Naive thymus-derived CD4-positive, alpha-beta T cell (primary cell): ENCODE measurements at regions of chr14 and their contacts with region 1.

Region 1: GRCh38 chr14:55354500-55354899 is 57.1 kb downstream of the ATG14 start:
- DNase-seq: peak; percentile 25 to 79 (median 73)
- ATAC-seq: peak; percentile 95
- H3K4me3 ChIP-seq: peak overlapping the region; percentile 12
- H3K4me3 Mint-ChIP-seq: peak overlapping the region in 9 of 10 donors; percentile 48 to 85 (median 72)
- H3K27ac ChIP-seq: peak overlapping the region; percentile 66
- H3K27ac Mint-ChIP-seq: peak overlapping the region; percentile 72 to 96 (median 95)
- H3K4me1 ChIP-seq: peaks cover 0 to 9% of the 10 kb centered on the region in 2 donors
- H3K4me1 Mint-ChIP-seq: peaks cover 6 to 29% (median 21%) of the 10 kb centered on the region in 7 donors
- H3K27me3 ChIP-seq: no peaks in the 10 kb centered on the region
- H3K27me3 Mint-ChIP-seq: no peaks in the 10 kb centered on the region

Region 2: DNA sequence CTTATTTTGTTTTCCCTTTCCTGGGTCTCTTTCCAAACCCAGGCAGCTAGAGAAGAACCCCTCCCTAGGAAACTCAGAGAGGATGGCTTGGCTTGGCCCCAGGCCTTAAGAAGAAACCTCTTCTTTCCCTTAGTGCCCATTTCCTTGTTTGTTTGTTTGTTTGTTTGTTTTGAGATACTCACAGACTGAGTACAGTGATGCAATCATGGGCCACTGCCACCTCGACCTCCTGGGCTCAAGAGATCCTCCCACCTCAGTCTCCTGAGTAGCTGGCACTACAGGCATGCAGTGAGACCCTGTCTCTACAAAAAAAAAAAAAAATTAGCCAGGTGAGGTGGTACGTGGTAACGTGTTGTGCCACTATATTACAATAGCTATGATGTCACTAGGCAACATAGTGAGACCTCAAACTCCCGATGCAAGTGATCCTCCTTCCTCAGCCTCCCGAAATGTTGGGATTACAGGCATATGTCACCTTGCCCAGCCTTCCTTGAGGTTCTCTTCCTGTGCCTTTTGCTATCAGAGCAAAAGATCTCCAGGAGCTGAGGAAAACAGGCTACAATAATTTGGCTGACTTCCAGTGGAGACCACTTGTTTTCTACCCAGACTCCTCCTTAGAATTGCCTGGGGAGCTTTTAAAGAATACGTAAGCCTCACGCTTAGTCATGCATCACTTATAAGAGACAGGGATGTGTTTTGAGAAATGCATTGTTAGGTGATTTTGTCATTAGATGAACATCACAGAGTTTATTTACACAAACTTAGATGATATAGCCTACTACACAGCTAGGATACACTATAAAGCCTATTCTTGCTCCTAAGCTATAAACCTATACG is 260.0 kb before region 1 on chr14:
- CTCF ChIA-PET with region 1: interaction called, 4 read pairs
- POLR2A ChIA-PET with region 1: no interaction called
- intact Hi-C with region 1: loop called in 1 of 2 experiments (anchors 1 kb)
- DNase-seq: no peak
- ATAC-seq: no peak
- H3K4me3 ChIP-seq: no peak overlapping the region
- H3K4me3 Mint-ChIP-seq: no peak overlapping the region
- H3K27ac ChIP-seq: no peak overlapping the region
- H3K27ac Mint-ChIP-seq: no peak overlapping the region
- H3K4me1 ChIP-seq: peaks cover 0 to 14% of the 10 kb centered on the region in 2 donors
- H3K4me1 Mint-ChIP-seq: peaks cover 12 to 43% (median 16%) of the 10 kb centered on the region in 7 donors
- H3K27me3 ChIP-seq: no peaks in the 10 kb centered on the region
- H3K27me3 Mint-ChIP-seq: peaks cover 0 to 4% (median 0%) of the 10 kb centered on the region in 5 donors

Region 3: GRCh38 chr14:55212634-55213033 is 141.9 kb before region 1 on chr14:
- CTCF ChIA-PET with region 1: interaction called, 19 read pairs
- POLR2A ChIA-PET with region 1: interaction called, 4 read pairs
- intact Hi-C with region 1: loop called (anchors 1 kb)
- DNase-seq: no peak
- ATAC-seq: no peak
- H3K4me3 ChIP-seq: no peak overlapping the region
- H3K4me3 Mint-ChIP-seq: no peak overlapping the region
- H3K27ac ChIP-seq: no peak overlapping the region
- H3K27ac Mint-ChIP-seq: no peak overlapping the region
- H3K4me1 ChIP-seq: no peaks in the 10 kb centered on the region
- H3K4me1 Mint-ChIP-seq: peaks cover 0 to 5% (median 5%) of the 10 kb centered on the region in 7 donors
- H3K27me3 ChIP-seq: no peaks in the 10 kb centered on the region
- H3K27me3 Mint-ChIP-seq: peaks cover 0 to 11% (median 0%) of the 10 kb centered on the region in 5 donors

Region 4: GRCh38 chr14:55301437-55302121 is 52.9 kb before region 1 on chr14:
- CTCF ChIA-PET with region 1: interaction called, 13 read pairs
- POLR2A ChIA-PET with region 1: no interaction called
- intact Hi-C with region 1: loop called (anchors 1 to 2 kb)
- DNase-seq: no peak
- ATAC-seq: peak; percentile 12
- H3K4me3 ChIP-seq: no peak overlapping the region
- H3K4me3 Mint-ChIP-seq: peak overlapping the region in 1 of 10 donors; percentile 8
- H3K27ac ChIP-seq: no peak overlapping the region
- H3K27ac Mint-ChIP-seq: peak overlapping the region in 1 of 9 donors; percentile 52
- H3K4me1 ChIP-seq: peaks cover 6% of the 10 kb centered on the region in 2 donors
- H3K4me1 Mint-ChIP-seq: peaks cover 29 to 69% (median 63%) of the 10 kb centered on the region in 7 donors
- H3K27me3 ChIP-seq: no peaks in the 10 kb centered on the region
- H3K27me3 Mint-ChIP-seq: no peaks in the 10 kb centered on the region

Region 5: GRCh38 chr14:55373784-55374705 is 19.5 kb after region 1 on chr14:
- CTCF ChIA-PET with region 1: interaction called, 12 read pairs
- POLR2A ChIA-PET with region 1: interaction called, 3 read pairs
- intact Hi-C with region 1: no loop called
- DNase-seq: peak in 8 of 9 donors; percentile 18 to 76 (median 58)
- ATAC-seq: peak; percentile 93
- H3K4me3 ChIP-seq: no peak overlapping the region
- H3K4me3 Mint-ChIP-seq: peak overlapping the region in 9 of 10 donors; percentile 22 to 82 (median 54)
- H3K27ac ChIP-seq: peak overlapping the region; percentile 64
- H3K27ac Mint-ChIP-seq: peak overlapping the region; percentile 75 to 94 (median 83)
- H3K4me1 ChIP-seq: peaks cover 12 to 20% of the 10 kb centered on the region in 2 donors
- H3K4me1 Mint-ChIP-seq: peaks cover 13 to 44% (median 30%) of the 10 kb centered on the region in 7 donors
- H3K27me3 ChIP-seq: no peaks in the 10 kb centered on the region
- H3K27me3 Mint-ChIP-seq: no peaks in the 10 kb centered on the region

Region 6: DNA sequence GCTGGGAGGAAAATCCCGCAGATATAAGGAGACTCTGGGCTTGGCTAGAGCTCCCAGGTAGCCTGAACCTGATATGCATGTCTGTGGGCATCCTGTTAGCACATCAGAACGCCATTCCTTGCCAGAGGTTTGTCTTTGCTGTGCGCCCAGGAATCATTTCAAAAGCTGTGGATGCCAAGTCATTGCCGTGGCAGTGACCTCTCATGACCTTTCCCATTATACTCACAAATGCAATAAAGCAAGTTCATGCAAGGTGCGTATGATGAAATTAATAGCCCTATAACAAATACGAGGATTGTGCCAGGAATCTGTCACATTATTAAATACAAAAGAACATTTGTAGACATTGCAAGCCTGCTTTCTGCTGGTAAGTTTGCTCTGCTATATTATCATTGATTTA is 534.6 kb after region 1 on chr14:
- CTCF ChIA-PET with region 1: no interaction called
- POLR2A ChIA-PET with region 1: no interaction called
- intact Hi-C with region 1: no loop called
- DNase-seq: no peak
- ATAC-seq: no peak
- H3K4me3 ChIP-seq: no peak overlapping the region
- H3K4me3 Mint-ChIP-seq: no peak overlapping the region
- H3K27ac ChIP-seq: no peak overlapping the region
- H3K27ac Mint-ChIP-seq: no peak overlapping the region
- H3K4me1 ChIP-seq: no peaks in the 10 kb centered on the region
- H3K4me1 Mint-ChIP-seq: peaks cover 0 to 2% (median 0%) of the 10 kb centered on the region in 7 donors
- H3K27me3 ChIP-seq: no peaks in the 10 kb centered on the region
- H3K27me3 Mint-ChIP-seq: peaks cover 17 to 41% (median 26%) of the 10 kb centered on the region in 5 donors